ENCODE measurements at regions of chr9 and their contacts with region 1.

Region 1: GRCh38 chr9:21252721-21253547 is 13.1 kb upstream of the IFNA14 start:
- H3K4me3 Mint-ChIP-seq: no peak overlapping the region
- H3K27ac Mint-ChIP-seq: no peak overlapping the region
- H3K4me1 Mint-ChIP-seq: peaks cover 23% of the 10 kb centered on the region
- H3K27me3 Mint-ChIP-seq: peaks cover 50% of the 10 kb centered on the region

Region 2: DNA sequence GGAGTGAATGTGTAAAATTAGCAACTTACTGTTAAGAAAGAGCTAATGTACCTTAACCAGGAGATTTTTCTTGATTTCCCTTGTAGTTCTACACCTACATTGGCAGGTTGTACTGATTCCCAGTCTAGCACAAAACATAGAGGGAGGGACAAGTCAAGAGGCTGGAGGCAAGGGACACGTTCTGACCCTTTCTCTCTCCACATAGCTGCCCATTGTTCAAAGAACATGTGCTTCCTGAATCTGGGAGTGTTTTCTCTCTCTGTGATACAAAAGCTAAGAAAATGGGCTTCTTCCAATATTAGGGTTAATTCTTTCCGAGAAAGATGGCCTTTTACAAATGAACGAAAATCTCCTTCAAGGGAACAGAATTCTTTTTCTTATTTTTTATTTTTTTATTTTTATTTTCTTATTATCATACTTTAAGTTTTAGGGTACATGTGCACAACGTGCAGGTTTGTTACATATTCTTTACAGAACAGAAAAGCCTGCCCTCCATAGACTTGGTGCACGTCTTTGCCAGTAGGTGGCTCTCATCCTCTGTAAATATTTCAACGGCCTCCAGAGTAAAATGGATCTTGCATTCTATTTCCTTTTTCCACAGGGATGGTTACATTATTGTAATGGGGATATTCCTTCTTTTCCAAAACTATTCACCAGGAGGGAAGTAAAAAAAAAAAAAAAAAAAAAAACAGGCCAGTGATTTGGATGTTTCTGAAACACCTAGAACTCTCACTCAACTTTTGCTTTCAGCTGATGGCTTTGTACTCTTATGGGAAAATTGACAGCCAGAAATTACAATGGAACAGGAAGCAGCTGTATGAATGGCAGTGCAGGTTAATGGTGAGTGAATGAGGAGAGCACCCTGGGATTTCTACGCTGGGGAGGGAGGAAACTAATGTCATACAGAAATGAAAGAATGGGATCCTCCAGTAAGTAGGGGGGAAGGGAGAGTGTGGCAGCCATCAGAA is 65.3 kb after region 1 on chr9:
- intact Hi-C with region 1: loop called (anchors 5 kb)
- H3K4me3 Mint-ChIP-seq: no peak overlapping the region
- H3K27ac Mint-ChIP-seq: no peak overlapping the region
- H3K4me1 Mint-ChIP-seq: peaks cover 9% of the 10 kb centered on the region
- H3K27me3 Mint-ChIP-seq: peaks cover 14% of the 10 kb centered on the region

Region 3: GRCh38 chr9:21402386-21403251 is 149.7 kb after region 1 on chr9:
- intact Hi-C with region 1: loop called (anchors 10 kb)
- H3K4me3 Mint-ChIP-seq: peak overlapping the region; percentile 53
- H3K27ac Mint-ChIP-seq: no peak overlapping the region
- H3K4me1 Mint-ChIP-seq: peaks cover 13% of the 10 kb centered on the region
- H3K27me3 Mint-ChIP-seq: peaks cover 69% of the 10 kb centered on the region

Region 4: DNA sequence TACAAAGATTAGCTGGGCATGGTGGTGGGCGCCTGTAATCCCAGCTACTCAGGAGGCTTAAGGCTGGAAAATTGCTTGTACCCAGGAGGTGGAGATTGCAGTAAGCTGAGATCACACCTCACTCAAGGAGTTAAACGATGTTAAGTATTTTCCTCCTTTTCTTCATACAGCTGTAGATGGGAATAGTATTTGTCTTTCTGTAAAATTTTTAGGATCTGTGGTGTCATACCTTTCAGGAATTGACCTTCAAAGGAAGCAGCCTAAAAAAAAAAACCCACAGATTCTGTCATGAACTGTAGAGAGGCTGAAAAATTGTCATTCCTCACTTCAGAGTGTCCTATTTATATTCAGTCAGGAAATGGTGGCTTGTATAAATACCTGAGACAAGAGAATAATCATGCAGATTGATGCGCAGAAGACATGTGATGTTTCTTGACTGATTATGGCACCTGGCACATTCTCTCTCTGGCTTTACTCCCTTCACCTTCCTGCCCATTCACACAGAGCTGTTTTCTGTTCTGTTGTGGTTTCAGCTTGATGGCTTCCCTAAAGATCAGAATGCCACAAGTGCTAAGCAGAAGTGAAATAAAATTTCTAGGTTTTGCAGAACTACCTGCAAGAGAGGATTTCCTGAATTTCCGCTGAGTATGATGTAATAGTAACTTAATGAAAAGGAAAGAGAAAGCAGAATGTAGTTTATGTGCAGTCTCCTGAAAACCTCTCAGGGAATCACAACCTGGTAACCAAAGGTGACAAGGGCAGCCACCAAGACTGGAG is 191.1 kb after region 1 on chr9:
- intact Hi-C with region 1: loop called (anchors 5 kb)
- H3K4me3 Mint-ChIP-seq: no peak overlapping the region
- H3K27ac Mint-ChIP-seq: no peak overlapping the region
- H3K4me1 Mint-ChIP-seq: peaks cover 10% of the 10 kb centered on the region
- H3K27me3 Mint-ChIP-seq: peaks cover 51% of the 10 kb centered on the region

Region 5: DNA sequence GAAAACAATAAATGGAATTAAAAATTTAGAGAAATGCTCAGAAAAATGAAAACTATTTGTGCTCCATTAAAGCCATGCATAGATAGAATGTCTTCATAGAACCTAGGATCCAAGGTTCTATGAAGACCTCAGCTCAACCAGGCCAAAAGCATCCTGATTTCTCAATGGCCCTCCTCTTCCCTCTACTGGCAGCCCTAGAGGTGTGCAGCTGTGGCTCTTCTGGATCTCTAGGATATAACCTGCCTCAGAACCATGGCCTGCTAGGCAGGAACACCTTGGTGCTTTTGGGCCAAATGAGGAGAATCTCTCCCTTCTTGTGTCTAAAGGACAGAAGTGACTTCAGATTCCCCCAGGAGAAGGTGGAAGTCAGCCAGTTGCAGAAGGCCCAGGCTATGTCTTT is 202.4 kb after region 1 on chr9:
- intact Hi-C with region 1: loop called (anchors 5 kb)
- H3K4me3 Mint-ChIP-seq: no peak overlapping the region
- H3K27ac Mint-ChIP-seq: no peak overlapping the region
- H3K4me1 Mint-ChIP-seq: no peaks in the 10 kb centered on the region
- H3K27me3 Mint-ChIP-seq: peaks cover 24% of the 10 kb centered on the region